CD4-positive, alpha-beta memory T cell (primary cell): ENCODE measurements at regions of chr17 and their contacts with region 1.

Region 1: DNA sequence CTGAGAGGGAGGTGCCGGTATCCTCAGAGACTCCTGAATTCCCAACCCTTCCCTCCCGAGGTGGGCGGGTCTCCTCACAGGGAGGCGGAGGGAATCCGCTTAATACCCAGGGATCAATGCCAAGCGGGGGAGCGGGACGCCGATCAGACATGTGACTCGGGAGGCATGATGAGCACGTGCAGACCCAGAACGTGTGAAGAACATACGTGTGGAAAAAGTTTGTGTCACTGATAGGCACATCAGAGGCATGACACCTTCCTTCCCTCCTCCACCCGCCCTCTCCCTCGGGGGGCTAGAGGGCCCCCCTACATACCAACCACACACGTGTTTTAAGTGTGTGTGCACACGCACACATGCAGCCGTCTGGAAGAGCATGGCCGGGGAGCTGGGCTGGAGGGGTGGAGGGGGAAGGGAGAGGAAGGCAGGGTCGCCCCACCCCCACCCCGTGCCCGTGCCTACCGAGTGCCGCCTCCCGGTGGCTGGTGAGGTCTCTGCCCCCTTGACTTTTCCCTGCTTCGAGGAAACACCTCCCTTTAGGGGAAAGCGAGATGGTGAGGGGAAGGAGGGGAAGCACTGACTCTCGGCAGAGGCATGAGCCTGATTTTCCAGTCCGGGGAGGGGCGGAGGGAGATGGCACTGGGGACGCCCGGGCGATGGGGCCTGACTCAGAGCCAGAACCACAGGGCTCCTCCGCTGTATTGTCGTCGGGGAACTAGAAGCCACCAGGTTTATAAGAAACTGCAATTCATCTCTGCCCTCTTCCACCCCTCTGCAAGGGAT is 12.1 kb upstream of the TBX21 start:
- DNase-seq: peak; percentile 44 to 94 (median 51)
- H3K4me3 ChIP-seq: peak overlapping the region in 1 of 2 donors; percentile 15
- H3K4me3 Mint-ChIP-seq: peak overlapping the region; percentile 35 to 82 (median 65)
- H3K27ac ChIP-seq: no peak overlapping the region
- H3K27ac Mint-ChIP-seq: peak overlapping the region in 4 of 7 donors; percentile 42 to 86 (median 74)
- H3K4me1 ChIP-seq: peaks cover 56% of the 10 kb centered on the region
- H3K4me1 Mint-ChIP-seq: peaks cover 41 to 74% (median 58%) of the 10 kb centered on the region in 4 donors
- H3K27me3 ChIP-seq: no peaks in the 10 kb centered on the region
- H3K27me3 Mint-ChIP-seq: no peaks in the 10 kb centered on the region

Region 2: GRCh38 chr17:47604598-47604927 is 116.4 kb before region 1 on chr17:
- CTCF ChIA-PET with region 1: no interaction called
- POLR2A ChIA-PET with region 1: no interaction called
- intact Hi-C with region 1: no loop called
- DNase-seq: no peak
- H3K4me3 ChIP-seq: no peak overlapping the region
- H3K4me3 Mint-ChIP-seq: no peak overlapping the region
- H3K27ac ChIP-seq: no peak overlapping the region
- H3K27ac Mint-ChIP-seq: peak overlapping the region in 2 of 7 donors; percentile 37 to 67
- H3K4me1 ChIP-seq: no peaks in the 10 kb centered on the region
- H3K4me1 Mint-ChIP-seq: peaks cover 0 to 6% (median 0%) of the 10 kb centered on the region in 4 donors
- H3K27me3 ChIP-seq: no peaks in the 10 kb centered on the region
- H3K27me3 Mint-ChIP-seq: no peaks in the 10 kb centered on the region

Region 3: DNA sequence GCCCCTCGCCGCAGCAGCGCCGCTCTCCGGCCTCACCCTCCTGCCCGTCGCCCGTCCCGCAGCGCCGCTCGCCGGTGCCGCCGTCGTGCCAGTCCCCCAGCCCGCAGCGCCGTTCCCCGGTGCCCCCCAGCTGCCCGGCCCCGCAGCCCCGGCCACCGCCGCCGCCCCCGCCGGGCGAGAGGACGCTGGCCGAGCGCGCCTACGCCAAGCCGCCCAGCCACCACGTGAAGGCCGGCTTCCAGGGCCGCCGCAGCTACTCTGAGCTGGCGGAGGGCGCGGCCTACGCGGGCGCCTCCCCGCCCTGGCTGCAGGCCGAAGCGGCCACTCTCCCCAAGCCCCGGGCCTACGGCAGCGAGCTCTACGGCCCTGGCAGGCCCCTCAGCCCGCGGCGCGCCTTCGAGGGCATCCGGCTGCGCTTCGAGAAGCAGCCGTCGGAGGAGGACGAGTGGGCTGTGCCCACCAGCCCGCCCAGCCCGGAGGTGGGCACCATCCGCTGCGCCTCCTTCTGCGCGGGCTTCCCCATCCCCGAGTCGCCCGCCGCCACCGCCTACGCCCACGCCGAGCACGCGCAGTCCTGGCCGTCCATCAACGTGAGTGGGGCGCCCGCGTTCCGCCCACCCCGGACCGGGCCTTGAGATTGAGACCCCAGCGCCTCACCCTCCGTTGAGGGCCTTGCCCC is 11.9 kb before region 1 on chr17:
- CTCF ChIA-PET with region 1: interaction called, 22 read pairs
- POLR2A ChIA-PET with region 1: interaction called, 44 read pairs
- intact Hi-C with region 1: loop called (anchors 1 kb)
- DNase-seq: peak in 1 of 5 donors; percentile 23
- H3K4me3 ChIP-seq: no peak overlapping the region
- H3K4me3 Mint-ChIP-seq: no peak overlapping the region
- H3K27ac ChIP-seq: no peak overlapping the region
- H3K27ac Mint-ChIP-seq: no peak overlapping the region
- H3K4me1 ChIP-seq: peaks cover 45% of the 10 kb centered on the region
- H3K4me1 Mint-ChIP-seq: peaks cover 39 to 68% (median 53%) of the 10 kb centered on the region in 4 donors
- H3K27me3 ChIP-seq: no peaks in the 10 kb centered on the region
- H3K27me3 Mint-ChIP-seq: no peaks in the 10 kb centered on the region

Region 4: GRCh38 chr17:47733047-47733673 is 12.2 kb after region 1 on chr17 and contains the start of gene TBX21:
- CTCF ChIA-PET with region 1: interaction called, 14 read pairs
- POLR2A ChIA-PET with region 1: interaction called, 25 read pairs
- intact Hi-C with region 1: loop called (anchors 1 kb)
- DNase-seq: peak; percentile 87 to 93 (median 88)
- H3K4me3 ChIP-seq: peak within 1 kb of the TSS; percentile 72 to 83
- H3K4me3 Mint-ChIP-seq: peak within 1 kb of the TSS; percentile 92 to 100 (median 100)
- H3K27ac ChIP-seq: peak within 1 kb of the TSS; percentile 70
- H3K27ac Mint-ChIP-seq: peak within 1 kb of the TSS; percentile 85 to 99 (median 97)
- H3K4me1 ChIP-seq: peaks cover 40% of the 10 kb centered on the region
- H3K4me1 Mint-ChIP-seq: peaks cover 31 to 83% (median 44%) of the 10 kb centered on the region in 4 donors
- H3K27me3 ChIP-seq: no peaks in the 10 kb centered on the region
- H3K27me3 Mint-ChIP-seq: peaks cover 0 to 1% of the 10 kb centered on the region in 2 donors
- total RNA-seq, gene TBX21: 15.8 to 17.9 TPM